ENCODE measurements at regions of chr9 and their contacts with region 1.

Region 1: DNA sequence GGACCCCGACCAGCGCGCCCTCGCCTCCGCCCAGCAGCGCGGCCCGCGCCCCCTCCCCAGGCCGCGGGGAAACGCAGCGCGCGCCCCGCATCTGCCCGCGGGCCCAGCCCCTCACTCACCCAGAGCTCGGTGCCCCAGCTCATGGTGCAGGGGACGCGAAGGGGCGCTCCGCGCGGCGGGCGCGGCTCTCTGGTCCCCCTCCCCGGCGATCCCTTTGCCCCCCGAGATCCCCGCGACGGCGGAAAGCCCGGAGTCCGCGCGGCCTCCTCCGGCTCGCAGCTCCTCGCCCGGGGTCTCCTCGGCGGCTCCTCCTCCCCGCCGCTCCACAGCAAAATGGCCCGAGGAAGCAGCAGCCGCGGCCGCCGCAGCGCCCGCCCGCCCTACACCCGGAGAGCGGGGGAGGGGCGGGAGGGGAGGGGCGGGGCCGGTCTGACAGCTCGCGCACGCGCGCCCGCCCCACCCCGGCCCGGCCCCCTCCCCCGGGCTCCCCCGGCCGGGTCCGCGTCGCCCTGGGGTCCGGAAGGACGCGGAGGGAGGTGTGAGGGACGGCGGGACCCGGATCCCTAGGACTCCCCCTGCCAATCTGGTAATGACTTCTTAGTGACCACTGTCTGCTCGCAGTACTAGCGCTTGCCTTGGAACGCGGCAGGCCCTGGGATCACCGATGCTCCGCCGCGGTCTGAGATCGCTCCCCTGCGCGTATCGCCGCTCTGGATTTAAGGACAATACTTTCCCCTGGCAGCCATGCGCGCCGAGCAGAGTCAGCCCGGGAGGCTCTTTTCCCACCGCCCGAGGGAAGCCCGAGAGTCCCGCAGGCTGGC is at the start of gene FNBP1:
- DNase-seq: peak; percentile 69 to 93 (median 80)
- ATAC-seq: peak; percentile 66
- H3K4me3 ChIP-seq: peak within 1 kb of the TSS; percentile 93
- H3K4me3 Mint-ChIP-seq: peak within 1 kb of the TSS; percentile 100
- H3K27ac ChIP-seq: peak within 1 kb of the TSS; percentile 84 to 88
- H3K27ac Mint-ChIP-seq: peak within 1 kb of the TSS; percentile 99
- H3K4me1 ChIP-seq: peaks cover 31% of the 10 kb centered on the region
- H3K4me1 Mint-ChIP-seq: peaks cover 72% of the 10 kb centered on the region
- H3K27me3 ChIP-seq: no peaks in the 10 kb centered on the region
- H3K27me3 Mint-ChIP-seq: no peaks in the 10 kb centered on the region
- CTCF ChIP-seq: no peak
- total RNA-seq, gene FNBP1: 166 to 181 TPM

Region 2: DNA sequence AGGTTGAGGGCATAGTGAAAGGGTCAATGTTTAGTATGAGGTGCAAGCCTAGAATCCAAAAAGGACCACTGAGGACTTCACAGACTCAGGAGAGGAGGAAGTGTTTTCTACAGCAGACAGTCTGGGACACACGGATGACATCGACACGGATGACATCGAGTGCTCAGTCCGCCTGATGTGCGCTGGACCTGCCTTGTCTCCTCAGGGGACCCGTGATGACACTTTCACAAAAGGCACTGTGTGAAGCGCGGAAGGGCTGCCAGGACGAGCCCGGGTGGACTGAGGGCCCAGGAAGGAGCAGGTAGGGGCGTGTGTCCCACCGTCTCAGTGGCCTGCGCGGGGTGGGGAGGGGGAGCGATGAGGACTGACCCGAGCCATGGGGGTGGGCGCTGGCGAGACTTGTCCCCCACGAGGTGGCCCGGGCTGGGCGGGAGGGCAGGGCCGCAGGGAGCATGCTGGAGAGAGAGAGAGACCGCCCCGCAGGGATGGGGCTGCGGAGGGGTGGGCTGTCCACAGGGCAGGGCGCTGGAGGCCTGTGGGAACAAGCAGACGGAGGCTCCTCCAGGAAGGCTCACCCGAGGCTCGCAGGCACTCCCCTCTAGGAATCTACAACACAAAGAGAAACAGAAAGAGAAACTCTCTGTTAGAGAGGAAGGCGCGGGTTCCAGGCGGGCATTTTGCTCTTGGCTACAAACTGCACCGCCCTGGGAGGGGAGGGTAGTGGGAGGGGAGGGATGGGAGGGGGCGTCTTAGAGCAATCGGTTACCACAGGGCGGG is 152.9 kb before region 1 on chr9:
- CTCF ChIA-PET with region 1: interaction called, 5 read pairs
- POLR2A ChIA-PET with region 1: interaction called, 206 read pairs
- intact Hi-C with region 1: loop called (anchors 2 kb)
- DNase-seq: peak; percentile 46 to 91 (median 64)
- ATAC-seq: no peak
- H3K4me3 ChIP-seq: peak overlapping the region; percentile 50
- H3K4me3 Mint-ChIP-seq: peak overlapping the region; percentile 96
- H3K27ac ChIP-seq: peak overlapping the region; percentile 91 to 99
- H3K27ac Mint-ChIP-seq: peak overlapping the region; percentile 99
- H3K4me1 ChIP-seq: peaks cover 98% of the 10 kb centered on the region
- H3K4me1 Mint-ChIP-seq: peaks cover 87% of the 10 kb centered on the region
- H3K27me3 ChIP-seq: no peaks in the 10 kb centered on the region
- H3K27me3 Mint-ChIP-seq: no peaks in the 10 kb centered on the region
- CTCF ChIP-seq: no peak

Region 3: DNA sequence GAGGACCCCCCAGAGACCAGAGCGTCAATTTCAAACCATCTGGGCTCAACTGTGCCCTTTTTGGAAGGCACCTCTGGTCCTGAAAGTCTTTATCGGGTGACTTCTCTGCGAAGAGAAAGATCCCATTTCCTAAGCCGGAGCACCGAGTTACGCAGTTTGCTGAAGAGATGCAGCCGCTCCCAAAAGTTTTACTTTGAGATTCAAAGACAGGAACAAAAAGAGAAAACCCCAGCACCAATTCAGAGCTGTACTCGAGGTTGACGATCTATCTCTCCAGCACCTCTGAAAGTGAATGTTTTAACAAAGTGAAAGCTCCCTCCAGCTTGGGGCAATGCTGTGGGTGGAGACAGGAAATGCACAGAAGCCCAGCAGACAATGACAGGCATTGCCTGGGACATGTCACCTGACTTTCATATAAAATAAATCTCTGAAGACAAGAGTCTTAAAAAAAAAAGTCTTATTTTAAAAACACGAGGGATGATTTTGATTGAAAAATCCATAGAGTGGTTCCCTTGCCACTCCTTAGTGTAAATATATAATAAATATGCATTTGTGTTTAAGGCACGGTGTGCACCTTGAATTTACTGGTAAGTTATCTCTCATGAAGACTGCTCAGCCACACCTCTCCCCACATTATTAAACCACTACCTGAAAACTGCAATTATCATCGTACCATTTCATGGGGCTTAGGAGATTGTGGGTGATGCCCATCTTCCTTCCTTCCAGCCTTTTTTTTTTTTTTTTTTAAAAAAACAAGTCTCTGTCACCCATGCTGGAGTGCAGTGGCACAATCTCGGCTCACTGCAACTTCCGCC is 79.9 kb before region 1 on chr9:
- CTCF ChIA-PET with region 1: interaction called, 4 read pairs
- POLR2A ChIA-PET with region 1: interaction called, 19 read pairs
- intact Hi-C with region 1: loop called in 1 of 2 experiments (anchors 2 kb)
- DNase-seq: peak; percentile 60 to 93 (median 66)
- ATAC-seq: peak; percentile 94
- H3K4me3 ChIP-seq: peak overlapping the region; percentile 64
- H3K4me3 Mint-ChIP-seq: peak overlapping the region; percentile 83
- H3K27ac ChIP-seq: peak overlapping the region; percentile 94 to 95
- H3K27ac Mint-ChIP-seq: peak overlapping the region; percentile 99
- H3K4me1 ChIP-seq: peaks cover 59% of the 10 kb centered on the region
- H3K4me1 Mint-ChIP-seq: peaks cover 80% of the 10 kb centered on the region
- H3K27me3 ChIP-seq: no peaks in the 10 kb centered on the region
- H3K27me3 Mint-ChIP-seq: no peaks in the 10 kb centered on the region
- CTCF ChIP-seq: no peak

Region 4: DNA sequence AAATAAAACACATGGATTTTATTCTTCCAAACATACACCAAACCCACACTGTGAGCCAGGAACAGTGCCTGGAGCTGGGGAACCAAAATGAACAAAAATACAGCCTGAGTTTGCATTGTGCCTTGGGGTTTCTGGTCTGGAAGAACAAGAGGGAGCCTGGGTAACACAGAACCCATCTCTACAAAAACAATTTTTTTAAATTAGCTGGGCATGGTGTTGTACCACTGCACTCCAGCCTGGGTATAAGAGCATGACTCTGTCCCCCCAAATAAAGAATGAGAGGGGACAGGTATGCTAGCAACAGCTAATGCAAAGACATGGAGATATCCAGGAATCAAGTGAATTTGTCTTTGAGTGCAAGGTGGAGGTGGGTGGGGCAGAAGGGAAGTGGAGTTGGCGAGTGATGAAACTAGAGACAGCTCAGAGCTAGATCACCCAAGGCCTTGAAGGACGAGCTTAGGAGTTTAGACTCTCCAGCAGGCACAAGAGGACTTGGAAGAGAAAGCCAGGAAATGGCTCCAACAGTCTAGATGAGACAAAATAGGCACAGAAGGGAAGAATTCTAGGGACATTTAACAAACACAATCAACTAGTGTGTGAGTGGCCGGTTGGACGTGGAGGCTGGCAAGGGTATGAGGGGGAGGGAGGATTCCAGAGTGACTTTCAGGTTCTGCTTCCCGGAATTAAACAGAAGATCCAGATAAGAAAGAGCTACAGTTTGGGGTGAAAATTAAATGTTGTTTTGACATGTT is 47.5 kb before region 1 on chr9:
- CTCF ChIA-PET with region 1: interaction called, 5 read pairs
- POLR2A ChIA-PET with region 1: interaction called, 12 read pairs
- intact Hi-C with region 1: no loop called
- DNase-seq: peak in 4 of 14 experiments; percentile 40 to 63 (median 56)
- ATAC-seq: peak; percentile 39
- H3K4me3 ChIP-seq: no peak overlapping the region
- H3K4me3 Mint-ChIP-seq: peak overlapping the region; percentile 32
- H3K27ac ChIP-seq: peak overlapping the region; percentile 64 to 68
- H3K27ac Mint-ChIP-seq: peak overlapping the region; percentile 80
- H3K4me1 ChIP-seq: peaks cover 74% of the 10 kb centered on the region
- H3K4me1 Mint-ChIP-seq: peaks cover 76% of the 10 kb centered on the region
- H3K27me3 ChIP-seq: no peaks in the 10 kb centered on the region
- H3K27me3 Mint-ChIP-seq: no peaks in the 10 kb centered on the region
- CTCF ChIP-seq: no peak

Region 5: DNA sequence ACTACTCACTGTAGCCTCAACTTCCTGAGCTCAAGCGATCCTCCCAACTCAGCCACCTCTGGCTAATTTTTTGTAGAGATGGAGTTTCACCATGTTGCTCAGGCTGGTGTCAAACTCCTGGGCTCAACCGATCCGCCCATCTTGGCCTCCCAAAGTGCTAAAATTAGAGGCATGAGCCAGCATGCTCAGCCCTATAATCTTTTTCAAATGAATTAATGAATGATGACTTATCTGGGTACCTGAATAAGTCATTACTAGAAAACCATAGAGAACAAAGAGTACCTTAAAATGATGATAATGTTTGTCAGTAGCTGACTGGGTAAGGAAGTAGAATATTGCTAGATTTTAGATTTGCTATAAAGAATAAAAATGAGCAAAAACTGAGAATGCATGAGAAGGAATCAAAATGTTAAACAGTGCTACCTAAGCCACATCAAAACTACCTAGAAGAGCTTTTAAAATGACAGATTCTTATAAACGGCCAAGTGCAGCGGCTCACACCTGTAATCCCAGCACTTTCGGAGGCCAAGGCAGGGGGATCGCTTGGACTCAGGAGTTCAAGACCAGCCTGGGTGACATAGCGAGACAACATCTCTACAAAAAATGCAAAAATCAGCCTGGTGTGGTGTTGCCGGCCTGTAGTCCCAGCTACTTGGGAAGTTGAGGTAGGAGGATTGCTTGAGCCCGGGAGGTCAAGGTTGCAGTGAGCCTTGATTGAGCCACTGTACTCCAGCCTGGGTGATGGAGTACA is 13.6 kb before region 1 on chr9:
- CTCF ChIA-PET with region 1: interaction called, 12 read pairs
- POLR2A ChIA-PET with region 1: interaction called, 58 read pairs
- intact Hi-C with region 1: no loop called
- DNase-seq: peak in 1 of 14 experiments; percentile 46
- ATAC-seq: no peak
- H3K4me3 ChIP-seq: peak overlapping the region; percentile 3
- H3K4me3 Mint-ChIP-seq: peak overlapping the region; percentile 32
- H3K27ac ChIP-seq: peak overlapping the region; percentile 12 to 78
- H3K27ac Mint-ChIP-seq: peak overlapping the region; percentile 92
- H3K4me1 ChIP-seq: peaks cover 83% of the 10 kb centered on the region
- H3K4me1 Mint-ChIP-seq: peaks cover 93% of the 10 kb centered on the region
- H3K27me3 ChIP-seq: no peaks in the 10 kb centered on the region
- H3K27me3 Mint-ChIP-seq: no peaks in the 10 kb centered on the region
- CTCF ChIP-seq: no peak

Region 6: GRCh38 chr9:130073373-130073772 is 30.3 kb after region 1 on chr9:
- CTCF ChIA-PET with region 1: no interaction called
- POLR2A ChIA-PET with region 1: no interaction called
- intact Hi-C with region 1: no loop called
- DNase-seq: peak in 2 of 14 experiments; percentile 42 to 53
- ATAC-seq: no peak
- H3K4me3 ChIP-seq: no peak overlapping the region
- H3K4me3 Mint-ChIP-seq: no peak overlapping the region
- H3K27ac ChIP-seq: no peak overlapping the region
- H3K27ac Mint-ChIP-seq: no peak overlapping the region
- H3K4me1 ChIP-seq: peaks cover 8% of the 10 kb centered on the region
- H3K4me1 Mint-ChIP-seq: peaks cover 35% of the 10 kb centered on the region
- H3K27me3 ChIP-seq: no peaks in the 10 kb centered on the region
- H3K27me3 Mint-ChIP-seq: no peaks in the 10 kb centered on the region
- CTCF ChIP-seq: no peak

Region 7: GRCh38 chr9:130118841-130119518 is 75.9 kb after region 1 on chr9:
- CTCF ChIA-PET with region 1: no interaction called
- POLR2A ChIA-PET with region 1: no interaction called
- intact Hi-C with region 1: no loop called
- DNase-seq: no peak
- ATAC-seq: no peak
- H3K4me3 ChIP-seq: no peak overlapping the region
- H3K4me3 Mint-ChIP-seq: no peak overlapping the region
- H3K27ac ChIP-seq: no peak overlapping the region
- H3K27ac Mint-ChIP-seq: no peak overlapping the region
- H3K4me1 ChIP-seq: no peaks in the 10 kb centered on the region
- H3K4me1 Mint-ChIP-seq: peaks cover 6% of the 10 kb centered on the region
- H3K27me3 ChIP-seq: no peaks in the 10 kb centered on the region
- H3K27me3 Mint-ChIP-seq: no peaks in the 10 kb centered on the region
- CTCF ChIP-seq: no peak

Region 8: GRCh38 chr9:130555968-130556367 is 512.9 kb after region 1 on chr9:
- CTCF ChIA-PET with region 1: no interaction called
- POLR2A ChIA-PET with region 1: no interaction called
- intact Hi-C with region 1: no loop called
- DNase-seq: no peak
- ATAC-seq: no peak
- H3K4me3 ChIP-seq: no peak overlapping the region
- H3K4me3 Mint-ChIP-seq: no peak overlapping the region
- H3K27ac ChIP-seq: no peak overlapping the region
- H3K27ac Mint-ChIP-seq: no peak overlapping the region
- H3K4me1 ChIP-seq: no peaks in the 10 kb centered on the region
- H3K4me1 Mint-ChIP-seq: no peaks in the 10 kb centered on the region
- H3K27me3 ChIP-seq: peaks cover 5% of the 10 kb centered on the region in 2 experiments
- H3K27me3 Mint-ChIP-seq: peaks cover 5% of the 10 kb centered on the region
- CTCF ChIP-seq: no peak